Adrenal gland (tissue), 19 donors: ENCODE measurements at regions of chr3 and their contacts with region 1.

Region 1: DNA sequence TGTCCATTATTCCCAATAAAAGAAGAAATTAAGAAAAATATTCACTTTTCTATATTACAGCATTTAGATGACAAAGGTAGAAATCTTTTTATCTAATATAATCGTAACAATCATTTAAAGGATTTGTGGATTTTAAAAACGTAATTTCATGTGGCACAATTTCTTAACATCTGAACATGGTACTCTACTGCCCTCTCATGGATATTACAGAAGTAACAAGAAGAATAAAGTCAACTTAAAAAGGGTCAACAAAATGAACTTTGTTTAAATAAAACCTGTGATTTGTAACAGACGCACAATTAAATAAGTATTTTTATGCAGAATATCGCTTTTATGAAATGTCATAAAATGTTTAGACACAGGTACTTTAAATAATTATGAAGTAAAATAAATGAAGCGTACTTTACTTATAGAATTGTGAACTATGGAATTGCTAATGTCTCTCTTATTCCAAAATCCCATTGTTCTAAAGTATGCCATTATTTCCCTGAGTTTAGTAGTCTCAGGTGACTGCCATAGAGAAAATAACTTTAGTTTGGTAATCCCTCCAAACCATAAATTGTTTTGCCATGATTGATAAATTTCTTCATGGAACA is 366.8 kb upstream of the ZNF385D start:
- DNase-seq: no peak
- H3K4me3 ChIP-seq: no peak overlapping the region
- H3K27ac ChIP-seq: no peak overlapping the region
- H3K4me1 ChIP-seq: no peaks in the 10 kb centered on the region
- H3K27me3 ChIP-seq: no peaks in the 10 kb centered on the region
- CTCF ChIP-seq: peak; percentile 46 to 84 (median 66)
- POLR2A ChIP-seq: no peak

Region 2: GRCh38 chr3:21752749-21753347 is 365.0 kb before region 1 on chr3:
- intact Hi-C with region 1: loop called in 1 of 2 experiments (anchors 10 kb)
- DNase-seq: peak in 4 of 7 donors; percentile 8 to 64 (median 24)
- H3K4me3 ChIP-seq: no peak overlapping the region
- H3K27ac ChIP-seq: no peak overlapping the region
- H3K4me1 ChIP-seq: no peaks in the 10 kb centered on the region
- H3K27me3 ChIP-seq: no peaks in the 10 kb centered on the region
- CTCF ChIP-seq: peak; percentile 16 to 56 (median 50)
- POLR2A ChIP-seq: no peak

Region 3: DNA sequence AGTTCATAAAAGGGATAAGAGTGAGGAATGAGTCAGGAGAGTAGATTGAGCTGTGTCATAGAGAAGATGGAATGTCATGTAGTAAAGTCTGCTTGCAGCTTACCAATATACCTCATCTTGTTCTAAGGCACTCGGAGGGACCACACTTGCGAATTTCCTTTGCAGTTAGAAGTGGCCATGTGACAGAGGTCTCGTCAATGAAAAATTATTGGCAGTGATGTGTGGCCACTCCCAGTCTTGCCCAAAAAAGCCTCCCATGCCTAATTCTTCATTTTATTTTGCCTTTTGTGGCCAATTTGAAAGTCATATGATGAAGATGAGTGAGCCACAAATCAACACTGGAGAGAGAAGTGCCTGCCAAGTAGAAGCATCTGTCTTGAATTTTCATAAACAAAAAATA is 98.8 kb after region 1 on chr3:
- intact Hi-C with region 1: no loop called
- DNase-seq: no peak
- H3K4me3 ChIP-seq: no peak overlapping the region
- H3K27ac ChIP-seq: no peak overlapping the region
- H3K4me1 ChIP-seq: no peaks in the 10 kb centered on the region
- H3K27me3 ChIP-seq: no peaks in the 10 kb centered on the region
- CTCF ChIP-seq: no peak
- POLR2A ChIP-seq: no peak